H1 (cell line): ENCODE measurements at regions of chr22 and their contacts with region 1.

Region 1: DNA sequence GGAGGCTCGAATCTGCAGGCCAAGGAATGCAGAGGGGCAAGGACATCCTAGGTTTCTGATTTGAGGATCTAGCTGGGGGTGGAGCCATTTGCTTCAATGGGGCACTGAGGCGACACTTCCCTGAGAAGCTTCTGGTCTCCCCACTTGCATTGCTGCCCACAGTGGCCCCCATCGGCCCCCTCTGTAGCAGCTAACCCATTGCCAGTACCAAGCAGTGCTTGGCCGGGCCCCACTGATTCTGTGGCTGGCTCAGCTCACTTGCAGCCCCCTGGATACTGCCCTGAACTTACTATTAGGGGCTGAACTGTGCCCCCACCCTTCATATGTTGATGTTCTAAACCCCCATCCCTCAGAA is 42.9 kb upstream of the SHISAL1 start:
- DNase-seq: no peak
- H3K4me3 ChIP-seq: no peak overlapping the region
- H3K27ac ChIP-seq: no peak overlapping the region
- H3K4me1 ChIP-seq: peaks cover 0 to 7% (median 3%) of the 10 kb centered on the region in 4 experiments; a peak in 3 of 7 replicates
- H3K27me3 ChIP-seq: no peaks in the 10 kb centered on the region
- CTCF ChIP-seq: no peak
- EP300 ChIP-seq: no peak
- POLR2A ChIP-seq: no peak
- RAD21 ChIP-seq: no peak

Region 2: GRCh38 chr22:44369293-44369652 is 13.6 kb after region 1 on chr22:
- CTCF ChIA-PET with region 1: interaction called, 20 read pairs
- POLR2A ChIA-PET with region 1: no interaction called
- DNase-seq: peak; percentile 31 to 92
- H3K4me3 ChIP-seq: no peak overlapping the region
- H3K27ac ChIP-seq: no peak overlapping the region
- H3K4me1 ChIP-seq: no peaks in the 10 kb centered on the region; a peak in 3 of 7 replicates
- H3K27me3 ChIP-seq: 0 out of 7 replicates have a peak, but pooled peaks cover 0 to under 1% (median 0%) of the 10 kb centered on the region in 4 experiments
- CTCF ChIP-seq: peak; percentile 74 to 87 (median 86)
- EP300 ChIP-seq: no peak
- POLR2A ChIP-seq: no peak
- RAD21 ChIP-seq: peak; percentile 72 to 81

Region 3: DNA sequence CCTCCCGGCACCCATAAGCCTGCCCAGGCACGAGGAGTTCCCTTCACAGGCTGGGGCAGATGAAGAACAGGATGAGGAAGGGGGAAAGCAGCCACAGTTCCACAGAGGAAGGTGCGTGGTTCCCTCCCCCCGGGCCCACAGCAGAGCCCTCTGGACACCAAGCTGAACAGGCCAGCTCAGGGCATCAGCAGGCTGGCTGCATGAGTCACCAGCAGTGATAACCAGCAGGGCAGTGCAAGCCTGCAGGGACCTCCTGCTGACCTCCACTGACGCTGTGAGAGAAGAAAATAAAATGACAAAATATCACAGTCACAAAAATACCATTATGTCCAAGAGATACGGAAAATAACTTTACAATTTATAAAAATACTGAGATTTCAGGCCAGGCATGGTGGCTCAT is 130.8 kb after region 1 on chr22:
- CTCF ChIA-PET with region 1: no interaction called
- POLR2A ChIA-PET with region 1: no interaction called
- DNase-seq: no peak
- H3K4me3 ChIP-seq: no peak overlapping the region
- H3K27ac ChIP-seq: no peak overlapping the region
- H3K4me1 ChIP-seq: 0 out of 7 replicates have a peak, but pooled peaks cover 0 to 5% (median under 1%) of the 10 kb centered on the region in 4 experiments
- H3K27me3 ChIP-seq: no peaks in the 10 kb centered on the region
- CTCF ChIP-seq: no peak
- EP300 ChIP-seq: no peak
- POLR2A ChIP-seq: no peak
- RAD21 ChIP-seq: no peak